Caco-2 (cell line): ENCODE measurements at regions of chr3 and their contacts with region 1.

Region 1: DNA sequence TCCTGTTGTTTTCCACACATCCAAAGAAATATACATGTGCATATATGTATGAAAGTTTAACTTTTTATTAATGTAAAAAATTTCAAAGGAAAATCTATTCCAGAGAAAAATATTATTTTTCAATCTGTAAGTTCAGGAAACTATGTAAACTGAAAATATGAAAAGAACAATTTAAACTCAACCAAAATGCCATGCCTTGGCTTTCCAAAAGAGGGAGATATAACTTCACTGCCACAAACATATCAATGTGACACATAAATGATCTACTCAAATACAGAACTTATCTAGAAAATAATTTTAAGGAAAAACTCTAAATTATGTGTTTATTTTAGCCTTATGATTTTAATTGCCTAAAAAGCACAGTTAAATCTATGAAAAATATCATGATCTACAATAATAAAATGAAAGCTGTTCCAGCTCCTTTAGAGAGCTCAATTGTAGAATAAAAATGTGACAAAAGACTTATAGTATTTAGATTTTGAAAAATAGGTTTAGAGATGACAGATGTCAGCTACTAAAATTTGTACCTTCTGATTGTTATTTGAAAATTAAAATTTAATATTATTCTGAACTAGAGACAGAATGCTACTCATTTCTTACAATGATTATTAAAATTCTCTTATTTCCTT is 94.8 kb downstream of the GBE1 start:
- DNase-seq: no peak
- H3K4me3 ChIP-seq: no peak overlapping the region
- H3K4me3 Mint-ChIP-seq: no peak overlapping the region
- H3K27ac Mint-ChIP-seq: no peak overlapping the region
- H3K4me1 ChIP-seq: no peaks in the 10 kb centered on the region
- H3K4me1 Mint-ChIP-seq: no peaks in the 10 kb centered on the region
- H3K27me3 ChIP-seq: no peaks in the 10 kb centered on the region
- H3K27me3 Mint-ChIP-seq: no peaks in the 10 kb centered on the region
- CTCF ChIP-seq: peak; percentile 46 to 51

Region 2: DNA sequence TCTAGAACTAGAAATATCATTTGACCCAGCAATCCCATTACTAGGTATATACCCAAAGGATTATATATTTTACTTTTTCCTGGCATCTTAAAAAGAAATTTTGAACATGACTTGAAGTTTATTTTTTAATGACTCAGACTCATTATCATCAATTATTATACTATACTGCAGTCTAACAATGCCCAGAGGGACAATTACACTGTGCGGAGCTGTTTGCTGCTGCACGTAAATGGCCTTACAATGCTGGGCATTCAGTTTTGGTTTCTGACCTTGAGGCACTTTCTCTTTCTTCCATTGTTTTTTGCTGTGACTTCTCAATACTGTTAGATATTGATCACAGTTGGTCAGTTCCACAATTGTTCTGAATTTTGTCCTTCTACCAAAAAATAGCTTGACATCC is 33.9 kb before region 1 on chr3:
- CTCF ChIA-PET with region 1: no interaction called
- POLR2A ChIA-PET with region 1: no interaction called
- intact Hi-C with region 1: no loop called
- DNase-seq: no peak
- H3K4me3 ChIP-seq: no peak overlapping the region
- H3K4me3 Mint-ChIP-seq: no peak overlapping the region
- H3K27ac Mint-ChIP-seq: no peak overlapping the region
- H3K4me1 ChIP-seq: no peaks in the 10 kb centered on the region
- H3K4me1 Mint-ChIP-seq: no peaks in the 10 kb centered on the region
- H3K27me3 ChIP-seq: no peaks in the 10 kb centered on the region
- H3K27me3 Mint-ChIP-seq: no peaks in the 10 kb centered on the region
- CTCF ChIP-seq: no peak

Region 3: DNA sequence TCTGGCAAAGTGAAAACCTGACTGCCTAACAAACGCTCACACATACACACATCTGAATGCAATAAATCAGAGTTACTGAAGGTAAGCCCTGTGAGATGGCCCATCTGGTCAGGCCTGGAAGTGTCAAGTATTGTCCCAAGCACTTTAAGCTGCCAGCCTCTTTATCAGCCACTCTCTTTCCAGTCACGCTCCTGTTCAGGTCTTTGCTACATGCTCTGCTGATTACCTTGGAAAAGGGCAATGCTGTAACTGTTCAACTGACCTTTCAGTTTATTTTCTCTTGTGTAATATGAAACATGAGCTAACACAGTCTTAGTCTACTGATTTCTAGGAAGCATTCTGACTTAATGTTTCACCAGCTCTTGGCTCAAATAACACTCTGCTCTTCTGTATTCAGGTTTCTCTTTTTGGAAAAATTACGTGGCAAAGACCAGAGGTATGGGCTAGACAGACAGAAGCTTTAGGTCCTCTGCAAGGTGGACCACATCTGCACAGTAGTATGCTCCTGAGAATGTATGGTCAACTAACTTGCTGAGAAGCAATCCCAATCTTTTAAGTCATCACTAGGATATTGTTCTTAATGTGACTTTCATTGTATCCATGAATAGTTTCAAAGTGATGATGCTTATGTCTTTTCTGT is 50.4 kb after region 1 on chr3:
- CTCF ChIA-PET with region 1: no interaction called
- POLR2A ChIA-PET with region 1: no interaction called
- intact Hi-C with region 1: no loop called
- DNase-seq: no peak
- H3K4me3 ChIP-seq: no peak overlapping the region
- H3K4me3 Mint-ChIP-seq: no peak overlapping the region
- H3K27ac Mint-ChIP-seq: no peak overlapping the region
- H3K4me1 ChIP-seq: no peaks in the 10 kb centered on the region
- H3K4me1 Mint-ChIP-seq: peaks cover 7% of the 10 kb centered on the region
- H3K27me3 ChIP-seq: no peaks in the 10 kb centered on the region
- H3K27me3 Mint-ChIP-seq: no peaks in the 10 kb centered on the region
- CTCF ChIP-seq: no peak

Region 4: GRCh38 chr3:81799403-81799802 is 132.8 kb after region 1 on chr3:
- CTCF ChIA-PET with region 1: no interaction called
- POLR2A ChIA-PET with region 1: no interaction called
- intact Hi-C with region 1: loop called (anchors 10 kb)
- DNase-seq: no peak
- H3K4me3 ChIP-seq: no peak overlapping the region
- H3K4me3 Mint-ChIP-seq: no peak overlapping the region
- H3K27ac Mint-ChIP-seq: no peak overlapping the region
- H3K4me1 ChIP-seq: no peaks in the 10 kb centered on the region
- H3K4me1 Mint-ChIP-seq: no peaks in the 10 kb centered on the region
- H3K27me3 ChIP-seq: no peaks in the 10 kb centered on the region
- H3K27me3 Mint-ChIP-seq: no peaks in the 10 kb centered on the region
- CTCF ChIP-seq: no peak

Region 5: GRCh38 chr3:81864272-81864671 is 197.7 kb after region 1 on chr3:
- CTCF ChIA-PET with region 1: no interaction called
- POLR2A ChIA-PET with region 1: no interaction called
- intact Hi-C with region 1: loop called (anchors 5 kb)
- DNase-seq: no peak
- H3K4me3 ChIP-seq: no peak overlapping the region
- H3K4me3 Mint-ChIP-seq: no peak overlapping the region
- H3K27ac Mint-ChIP-seq: no peak overlapping the region
- H3K4me1 ChIP-seq: no peaks in the 10 kb centered on the region
- H3K4me1 Mint-ChIP-seq: no peaks in the 10 kb centered on the region
- H3K27me3 ChIP-seq: no peaks in the 10 kb centered on the region
- H3K27me3 Mint-ChIP-seq: peaks cover 16% of the 10 kb centered on the region
- CTCF ChIP-seq: no peak